Heart left ventricle (tissue), 16 donors: ENCODE measurements at regions of chr16 and their contacts with region 1.

Region 1: DNA sequence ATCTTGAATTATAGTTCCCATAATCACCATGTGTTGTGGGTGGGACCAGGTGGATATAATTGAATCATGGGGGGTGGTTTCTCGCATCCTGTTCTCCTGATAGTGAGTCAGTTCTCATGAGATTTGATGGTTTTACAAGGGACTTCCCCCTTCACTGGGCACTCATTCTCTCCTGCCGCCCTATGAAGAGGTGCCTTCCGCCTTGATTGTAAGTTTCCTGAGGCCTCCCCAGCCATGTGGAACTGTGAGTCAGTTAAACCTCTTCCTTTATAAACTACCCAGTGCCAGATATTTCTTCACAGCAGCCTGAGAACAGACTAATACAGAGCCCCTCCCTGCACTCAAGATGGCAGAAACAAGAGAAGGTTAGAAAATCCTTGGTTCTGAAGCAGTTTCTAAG is 26.4 kb downstream of the LDAF1 start:
- DNase-seq: no peak
- ATAC-seq: no peak
- H3K4me3 ChIP-seq: no peak overlapping the region
- H3K27ac ChIP-seq: no peak overlapping the region
- H3K4me1 ChIP-seq: peaks cover 0 to 7% (median 2%) of the 10 kb centered on the region in 12 donors
- H3K27me3 ChIP-seq: no peaks in the 10 kb centered on the region
- CTCF ChIP-seq: no peak
- POLR2A ChIP-seq: no peak

Region 2: GRCh38 chr16:21277927-21278706 is 93.3 kb after region 1 on chr16 and contains the start of gene CRYM:
- intact Hi-C with region 1: loop called in 4 of 10 experiments (anchors 5 kb)
- DNase-seq: peak; percentile 65 to 82 (median 66)
- ATAC-seq: peak; percentile 87 to 96 (median 93)
- H3K4me3 ChIP-seq: peak within 1 kb of the TSS; percentile 24 to 93 (median 64)
- H3K27ac ChIP-seq: peak within 1 kb of the TSS; percentile 28 to 93 (median 82)
- H3K4me1 ChIP-seq: peaks cover 0 to 24% (median 5%) of the 10 kb centered on the region in 12 donors
- H3K27me3 ChIP-seq: peaks cover 0 to 54% (median 7%) of the 10 kb centered on the region in 9 donors
- CTCF ChIP-seq: peak; percentile 65 to 90 (median 78)
- POLR2A ChIP-seq: peak in 1 of 2 donors; percentile 68
- total RNA-seq, gene CRYM: 41.0 to 267 (median 116) TPM

Region 3: DNA sequence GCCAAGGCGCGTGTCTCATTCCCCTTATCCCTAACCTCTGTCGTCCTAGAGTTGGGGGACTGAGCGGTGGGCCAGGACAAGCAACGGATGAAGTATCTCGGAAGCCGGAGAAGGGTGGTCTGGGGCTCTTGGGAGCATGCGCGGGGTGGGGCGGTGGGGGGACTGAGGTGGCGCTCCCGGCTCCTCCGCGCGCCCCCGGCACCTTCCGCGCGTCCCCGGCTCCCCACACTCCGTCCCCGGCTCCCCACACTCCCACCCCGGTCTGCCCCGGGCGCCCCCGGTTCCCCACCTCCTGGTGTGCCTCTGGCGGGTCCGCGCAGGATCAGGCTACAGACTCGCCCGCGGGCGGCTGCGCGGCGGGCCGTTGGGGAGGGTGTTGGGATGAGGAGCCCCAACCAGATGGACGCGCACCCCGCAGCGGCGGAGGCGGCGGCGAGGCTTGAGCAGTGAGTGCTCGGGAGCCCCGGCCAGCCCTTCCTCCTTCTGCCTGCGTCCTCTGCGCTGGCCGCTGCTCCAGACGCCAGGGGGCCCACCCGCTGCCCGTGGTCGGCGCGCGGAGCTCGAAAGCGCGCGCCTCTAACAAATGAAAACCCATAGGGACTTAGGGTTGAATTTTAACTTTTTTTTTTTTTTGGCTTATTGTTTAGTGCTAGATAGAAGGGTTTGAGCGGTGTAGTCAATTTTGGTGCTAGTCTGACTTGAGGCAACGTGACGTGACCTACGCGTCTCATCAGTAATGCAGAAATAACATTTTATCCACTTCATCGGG is 98.9 kb after region 1 on chr16:
- intact Hi-C with region 1: loop called in 4 of 10 experiments (anchors 5 kb)
- DNase-seq: peak; percentile 45 to 81 (median 70)
- ATAC-seq: peak; percentile 69 to 96 (median 94)
- H3K4me3 ChIP-seq: peak overlapping the region; percentile 14 to 65 (median 54)
- H3K27ac ChIP-seq: peak overlapping the region in 11 of 12 donors; percentile 32 to 85 (median 71)
- H3K4me1 ChIP-seq: peaks cover 0 to 16% (median 2%) of the 10 kb centered on the region in 12 donors
- H3K27me3 ChIP-seq: peaks cover 0 to 52% (median 9%) of the 10 kb centered on the region in 9 donors
- CTCF ChIP-seq: peak; percentile 33 to 76 (median 46)
- POLR2A ChIP-seq: no peak

Region 4: GRCh38 chr16:21300309-21301167 is 115.7 kb after region 1 on chr16:
- intact Hi-C with region 1: loop called (anchors 1 to 5 kb)
- DNase-seq: peak; percentile 82 to 96 (median 95)
- ATAC-seq: peak; percentile 94 to 98 (median 96)
- H3K4me3 ChIP-seq: peak overlapping the region; percentile 52 to 78 (median 67)
- H3K27ac ChIP-seq: peak overlapping the region; percentile 48 to 88 (median 70)
- H3K4me1 ChIP-seq: peaks cover 0 to 19% (median 9%) of the 10 kb centered on the region in 12 donors
- H3K27me3 ChIP-seq: peaks cover 0 to 9% (median 0%) of the 10 kb centered on the region in 9 donors
- CTCF ChIP-seq: peak; percentile 63 to 95 (median 82)
- POLR2A ChIP-seq: peak in 1 of 2 donors; percentile 39

Region 5: DNA sequence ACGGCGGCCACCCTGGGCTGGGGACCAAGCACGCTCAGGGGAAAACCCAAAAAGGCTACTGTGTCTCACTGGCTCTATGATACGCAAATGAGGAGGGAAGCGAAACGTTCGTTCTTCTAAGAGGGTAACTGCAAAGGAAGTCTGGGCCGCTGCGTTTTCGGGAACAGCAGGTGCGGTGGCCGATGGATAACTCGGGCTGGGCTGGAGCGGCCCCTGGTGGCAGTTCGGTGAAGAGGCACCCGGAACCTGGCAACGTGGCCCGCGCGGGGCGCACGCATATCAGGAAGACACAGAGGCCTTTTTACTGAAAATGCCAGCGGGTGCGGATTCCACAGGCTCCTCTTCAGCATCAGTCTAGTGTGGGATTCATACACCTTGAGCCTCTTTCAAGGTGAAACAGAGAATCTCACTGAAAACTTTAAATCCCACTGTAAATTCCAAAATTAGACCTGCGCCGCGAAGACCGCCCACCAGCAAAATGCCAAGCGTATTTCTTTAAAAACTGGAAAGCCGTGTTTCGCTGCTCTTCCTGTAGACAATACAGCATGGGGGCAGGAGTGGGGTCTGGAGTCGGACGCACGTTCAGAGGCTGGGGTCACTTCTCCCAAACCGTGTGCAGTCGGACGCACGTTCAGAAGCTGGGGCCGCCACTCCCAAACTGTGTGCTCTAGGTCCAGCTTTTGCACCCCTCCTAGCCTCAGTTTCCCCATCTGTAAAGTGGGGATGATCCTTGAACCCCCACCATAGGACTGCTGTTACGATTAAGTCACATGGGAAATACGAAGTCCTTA is 370.2 kb after region 1 on chr16:
- intact Hi-C with region 1: loop called in 6 of 10 experiments (anchors 2 to 10 kb)
- DNase-seq: peak; percentile 88 to 96 (median 89)
- ATAC-seq: peak; percentile 22 to 69 (median 67)
- H3K4me3 ChIP-seq: peak overlapping the region in 6 of 12 donors; percentile 6 to 23 (median 18)
- H3K27ac ChIP-seq: no peak overlapping the region
- H3K4me1 ChIP-seq: peaks cover 2 to 26% (median 14%) of the 10 kb centered on the region in 12 donors
- H3K27me3 ChIP-seq: peaks cover 0 to 10% (median 0%) of the 10 kb centered on the region in 9 donors
- CTCF ChIP-seq: peak; percentile 95 to 100 (median 100)
- POLR2A ChIP-seq: no peak

Region 6: DNA sequence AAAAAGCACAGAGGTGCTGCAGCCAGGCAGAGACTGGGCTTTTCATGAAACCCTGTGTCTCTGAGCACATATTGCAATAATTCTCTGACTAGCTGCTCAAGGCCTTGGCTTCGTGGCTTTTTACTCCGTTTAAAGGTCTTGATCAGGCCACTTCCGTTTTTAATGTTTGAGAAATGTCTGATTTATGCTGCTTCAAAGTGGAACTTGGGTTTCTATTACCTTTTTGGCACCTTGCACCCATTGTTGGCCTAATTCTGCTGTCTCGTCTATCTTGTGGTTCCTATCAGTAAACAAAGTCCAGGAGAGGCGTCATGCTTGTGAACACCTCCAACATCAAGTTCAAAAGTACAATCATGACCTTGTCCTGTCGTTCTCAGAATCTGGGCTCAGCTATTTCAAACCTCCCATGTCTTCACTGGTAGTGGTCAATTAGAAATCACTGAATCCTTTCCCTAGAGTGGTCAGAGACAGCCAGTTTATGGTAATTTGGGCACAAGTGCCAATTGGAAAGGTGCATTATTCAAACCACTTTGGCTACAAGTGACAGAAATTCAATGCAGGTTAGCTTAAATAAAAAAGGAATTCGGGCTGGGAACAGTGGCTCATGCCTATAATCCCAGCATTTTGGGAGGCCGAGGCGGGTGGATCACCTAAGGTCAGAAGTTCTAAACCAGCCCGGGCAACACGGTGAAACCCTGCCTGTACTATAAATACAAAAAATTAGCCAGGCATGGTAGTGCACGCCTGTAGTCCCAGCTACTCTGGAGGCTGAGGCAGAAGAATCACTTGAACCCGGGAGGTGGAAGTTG is 381.2 kb after region 1 on chr16:
- intact Hi-C with region 1: loop called in 1 of 10 experiments (anchors 10 kb)
- DNase-seq: no peak
- ATAC-seq: no peak
- H3K4me3 ChIP-seq: no peak overlapping the region
- H3K27ac ChIP-seq: no peak overlapping the region
- H3K4me1 ChIP-seq: peaks cover 0 to 7% (median 0%) of the 10 kb centered on the region in 12 donors
- H3K27me3 ChIP-seq: no peaks in the 10 kb centered on the region
- CTCF ChIP-seq: no peak
- POLR2A ChIP-seq: no peak

Region 7: DNA sequence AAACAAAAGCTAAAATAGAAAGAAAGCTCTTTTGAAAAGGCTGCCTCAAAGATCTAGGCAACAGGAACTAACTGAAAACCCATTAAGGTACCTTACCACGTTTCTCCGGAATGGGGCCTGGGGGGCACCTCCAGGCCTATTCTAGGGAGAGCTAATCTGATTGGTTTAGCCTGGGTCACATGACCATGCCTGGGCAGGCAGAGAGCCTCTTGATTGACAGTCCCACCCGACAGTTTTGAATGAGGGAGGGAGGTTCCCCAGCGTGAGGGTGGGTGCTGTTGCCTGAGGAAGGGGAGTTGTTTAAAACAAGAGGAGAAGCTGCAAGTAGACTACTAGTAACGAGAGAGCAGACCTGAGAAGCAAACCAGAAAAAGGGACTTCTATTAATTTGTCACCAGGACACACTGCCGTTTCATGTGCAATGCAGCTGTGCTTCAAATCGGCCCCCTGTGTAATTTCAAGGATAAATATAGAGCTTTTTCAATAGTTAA is 1485.8 kb after region 1 on chr16:
- intact Hi-C with region 1: loop called in 1 of 10 experiments (anchors 10 kb)
- DNase-seq: peak in 1 of 5 donors; percentile 19
- ATAC-seq: no peak
- H3K4me3 ChIP-seq: no peak overlapping the region
- H3K27ac ChIP-seq: no peak overlapping the region
- H3K4me1 ChIP-seq: peaks cover 0 to 20% (median 0%) of the 10 kb centered on the region in 12 donors
- H3K27me3 ChIP-seq: peaks cover 0 to 10% (median 2%) of the 10 kb centered on the region in 9 donors
- CTCF ChIP-seq: no peak
- POLR2A ChIP-seq: no peak